Activated CD4-positive, alpha-beta memory T cell treated with anti-CD3 and anti-CD28 coated beads, Interleukin-2, amount 10 ng/mL, durations not matched to agents 7 days and 5 days (primary cell): ENCODE measurements at regions of chr11 and their contacts with region 1.

Region 1: DNA sequence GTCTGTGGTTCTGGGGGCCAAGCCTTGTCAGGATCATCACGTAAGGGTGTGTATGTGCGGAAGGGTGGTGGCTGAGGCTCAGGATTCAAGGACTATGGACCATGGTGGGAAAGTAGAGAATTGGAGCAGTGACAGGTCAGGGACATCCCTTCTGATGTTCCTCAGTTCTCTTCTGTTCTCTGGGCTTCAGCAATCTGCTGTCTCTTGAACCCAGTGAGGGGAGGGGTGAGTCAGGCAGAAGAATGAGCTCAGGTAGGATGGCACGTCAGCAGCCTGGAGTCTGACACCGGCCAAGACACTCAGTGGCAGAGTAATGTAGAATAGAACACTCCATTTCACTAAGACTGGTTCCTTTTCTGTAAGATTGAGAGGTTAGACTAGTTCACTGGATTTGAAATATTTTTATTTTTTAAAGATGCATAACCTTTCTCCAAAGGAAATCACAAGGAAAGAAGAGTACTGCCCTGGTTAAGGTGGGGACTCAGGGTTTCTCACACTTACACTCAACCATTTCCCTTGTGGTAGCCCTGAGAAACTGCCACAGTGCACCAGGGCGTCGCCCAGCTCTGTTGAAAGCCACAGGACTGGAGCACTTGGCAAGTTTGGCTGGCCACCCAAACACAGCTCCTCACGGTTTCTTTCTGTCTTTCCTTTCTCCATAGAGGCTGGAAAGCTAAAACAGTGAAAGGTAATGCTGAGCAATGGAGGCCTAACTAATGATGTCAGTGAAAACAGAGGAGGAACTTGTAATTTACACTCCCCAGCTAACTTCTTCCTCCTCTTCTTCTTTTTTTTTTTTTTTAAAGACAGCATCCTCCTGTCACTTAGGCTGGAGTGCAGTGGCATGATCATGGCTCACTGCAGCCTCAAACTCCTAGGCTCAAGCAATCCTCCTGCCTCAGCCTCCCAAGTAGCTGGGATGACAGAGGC is 23.1 kb upstream of the MICAL2 start:
- DNase-seq: peak; percentile 82
- H3K4me3 Mint-ChIP-seq: peak overlapping the region; percentile 55
- H3K27ac Mint-ChIP-seq: peak overlapping the region; percentile 93
- H3K4me1 Mint-ChIP-seq: peaks cover 76% of the 10 kb centered on the region
- H3K27me3 Mint-ChIP-seq: peaks cover 3% of the 10 kb centered on the region

Region 2: DNA sequence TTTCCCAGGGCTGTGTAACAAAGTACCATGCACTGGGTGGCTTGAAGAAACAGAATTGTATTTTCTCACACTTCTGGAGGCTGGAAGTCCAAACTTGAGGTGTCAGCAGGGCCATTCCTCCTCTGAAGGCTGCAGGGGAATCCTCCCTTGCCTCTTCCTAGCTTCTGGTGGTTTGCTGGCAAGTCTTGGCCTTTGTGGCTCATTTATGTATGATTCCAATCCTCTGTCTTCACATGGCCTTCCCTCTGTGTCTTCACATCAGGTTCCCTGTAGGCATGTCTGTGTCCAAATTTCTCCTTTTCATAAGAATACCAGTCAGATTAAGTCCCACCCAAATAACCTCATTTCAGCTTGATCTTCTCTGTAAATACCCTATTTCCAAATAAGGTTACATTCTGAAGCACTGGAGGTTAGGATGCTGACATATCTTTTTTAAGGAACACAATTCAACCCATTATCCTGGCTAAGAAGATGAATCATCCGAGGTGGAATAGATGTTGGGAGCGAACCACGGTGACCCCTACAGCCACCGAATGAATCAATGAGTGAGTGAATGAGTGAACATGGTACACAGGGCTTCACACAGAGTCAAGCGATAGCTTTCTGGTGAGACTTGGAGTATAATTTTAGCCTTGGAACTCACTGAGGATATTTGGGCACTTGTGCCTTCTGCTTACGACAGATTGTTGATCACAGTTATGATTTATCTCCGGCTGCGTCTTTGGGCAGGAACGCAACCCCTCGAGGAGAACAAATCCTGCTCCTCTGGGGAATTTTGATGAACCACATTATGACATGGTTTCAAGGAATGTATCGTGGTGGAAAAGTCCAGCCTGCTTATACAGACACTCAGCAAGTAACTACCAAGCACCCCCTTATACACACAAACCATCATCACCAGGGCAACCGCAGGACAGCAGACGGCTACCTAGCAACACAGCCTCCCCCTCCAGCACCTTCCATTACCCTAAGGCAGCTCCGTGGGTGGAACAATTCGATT is 11.2 kb before region 1 on chr11:
- CTCF ChIA-PET with region 1: interaction called, 3 read pairs
- POLR2A ChIA-PET with region 1: interaction called, 10 read pairs
- DNase-seq: no peak
- H3K4me3 Mint-ChIP-seq: no peak overlapping the region
- H3K27ac Mint-ChIP-seq: no peak overlapping the region
- H3K4me1 Mint-ChIP-seq: peaks cover 5% of the 10 kb centered on the region
- H3K27me3 Mint-ChIP-seq: peaks cover 13% of the 10 kb centered on the region

Region 3: GRCh38 chr11:12110201-12110713 is 22.9 kb after region 1 on chr11 and contains the start of gene MICAL2:
- CTCF ChIA-PET with region 1: interaction called, 11 read pairs
- POLR2A ChIA-PET with region 1: interaction called, 117 read pairs
- DNase-seq: peak; percentile 89
- H3K4me3 Mint-ChIP-seq: peak within 1 kb of the TSS; percentile 82
- H3K27ac Mint-ChIP-seq: peak within 1 kb of the TSS; percentile 97
- H3K4me1 Mint-ChIP-seq: peaks cover 63% of the 10 kb centered on the region
- H3K27me3 Mint-ChIP-seq: no peaks in the 10 kb centered on the region
- total RNA-seq, gene MICAL2: 135 to 143 TPM

Region 4: GRCh38 chr11:12143461-12144258 is 56.3 kb after region 1 on chr11:
- CTCF ChIA-PET with region 1: no interaction called
- POLR2A ChIA-PET with region 1: interaction called, 10 read pairs
- DNase-seq: no peak
- H3K4me3 Mint-ChIP-seq: no peak overlapping the region
- H3K27ac Mint-ChIP-seq: peak overlapping the region; percentile 70
- H3K4me1 Mint-ChIP-seq: peaks cover 66% of the 10 kb centered on the region
- H3K27me3 Mint-ChIP-seq: no peaks in the 10 kb centered on the region

Region 5: DNA sequence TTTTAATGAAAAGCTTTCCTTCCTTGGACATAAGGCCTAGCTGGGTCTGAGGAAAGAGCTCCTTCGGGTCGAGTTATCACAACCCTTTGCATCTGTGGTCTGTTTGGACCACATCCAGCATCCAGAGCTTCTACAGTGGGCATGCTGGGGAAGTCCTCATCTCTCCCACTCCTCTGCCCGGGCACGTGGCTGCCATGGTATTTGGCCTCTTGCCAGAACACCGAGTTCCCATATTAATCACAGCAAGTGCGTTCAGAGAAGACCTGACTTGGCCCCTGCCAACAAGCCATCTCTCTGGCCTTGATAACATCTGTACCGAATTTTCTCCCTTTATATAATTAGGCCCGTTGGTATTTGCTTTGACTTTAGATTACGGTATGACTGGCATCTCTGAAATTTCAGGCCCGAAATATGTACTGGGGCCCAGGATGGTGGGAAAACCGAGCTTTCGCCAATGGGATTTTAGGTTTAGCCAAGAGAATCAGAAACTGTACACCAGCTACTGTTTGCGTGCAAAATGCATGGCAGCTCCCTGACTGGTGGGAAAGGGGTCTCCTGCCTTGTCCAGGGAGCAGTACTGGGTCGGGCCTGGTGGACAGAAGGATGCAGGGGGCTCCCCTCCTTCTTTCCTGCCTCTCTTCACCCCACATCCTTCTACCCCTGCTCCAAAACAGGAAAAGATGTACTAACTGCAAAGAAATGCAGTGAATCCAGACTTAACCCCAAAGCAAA is 113.1 kb after region 1 on chr11:
- CTCF ChIA-PET with region 1: interaction called, 24 read pairs
- POLR2A ChIA-PET with region 1: interaction called, 65 read pairs
- DNase-seq: no peak
- H3K4me3 Mint-ChIP-seq: no peak overlapping the region
- H3K27ac Mint-ChIP-seq: peak overlapping the region; percentile 98
- H3K4me1 Mint-ChIP-seq: peaks cover 75% of the 10 kb centered on the region
- H3K27me3 Mint-ChIP-seq: no peaks in the 10 kb centered on the region

Region 6: DNA sequence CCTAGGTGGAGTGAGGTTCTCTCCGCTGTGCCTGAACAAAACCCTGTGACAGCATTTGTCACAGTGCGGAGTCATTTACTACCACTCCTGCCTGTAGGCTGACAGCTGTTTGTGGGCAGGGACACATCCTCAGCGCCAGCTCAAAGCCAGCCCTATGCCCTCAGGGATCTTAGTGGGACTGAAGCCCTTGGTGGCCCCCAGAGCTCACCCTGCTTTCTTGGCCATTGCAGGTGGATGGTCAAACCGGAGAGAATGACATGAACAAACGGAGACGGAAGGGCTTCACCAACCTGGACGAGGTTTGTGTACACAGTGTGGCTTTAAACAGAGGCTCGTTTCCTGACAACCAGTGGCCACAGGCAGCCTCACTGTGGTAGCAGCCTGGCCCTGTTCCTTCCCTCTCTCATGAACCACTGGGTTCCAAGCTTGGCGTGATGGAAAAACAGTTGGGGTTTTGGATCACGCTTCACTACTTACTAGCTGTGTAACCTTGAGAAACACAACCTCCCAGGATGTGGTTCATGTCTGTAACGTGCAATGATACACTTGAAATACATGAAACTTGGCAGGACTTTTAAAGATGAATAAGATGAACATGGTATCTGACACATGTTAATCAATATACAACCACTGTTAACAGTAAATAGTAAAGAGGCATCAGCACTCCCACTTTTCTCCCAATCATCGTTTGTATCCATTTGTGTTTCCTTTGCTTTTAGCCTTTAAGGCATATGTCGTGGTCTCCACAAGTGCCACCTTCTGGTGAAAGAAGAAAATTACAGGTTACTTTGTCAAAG is 148.8 kb after region 1 on chr11:
- CTCF ChIA-PET with region 1: interaction called, 73 read pairs
- POLR2A ChIA-PET with region 1: interaction called, 35 read pairs
- DNase-seq: peak; percentile 74
- H3K4me3 Mint-ChIP-seq: peak overlapping the region; percentile 33
- H3K27ac Mint-ChIP-seq: peak overlapping the region; percentile 95
- H3K4me1 Mint-ChIP-seq: peaks cover 36% of the 10 kb centered on the region
- H3K27me3 Mint-ChIP-seq: no peaks in the 10 kb centered on the region

Region 7: GRCh38 chr11:12288212-12288930 is 201.0 kb after region 1 on chr11:
- CTCF ChIA-PET with region 1: interaction called, 15 read pairs
- POLR2A ChIA-PET with region 1: no interaction called
- DNase-seq: peak; percentile 61
- H3K4me3 Mint-ChIP-seq: no peak overlapping the region
- H3K27ac Mint-ChIP-seq: no peak overlapping the region
- H3K4me1 Mint-ChIP-seq: peaks cover 16% of the 10 kb centered on the region
- H3K27me3 Mint-ChIP-seq: no peaks in the 10 kb centered on the region